Activated naive CD4-positive, alpha-beta T cell treated with anti-CD3 and anti-CD28 coated beads, Interleukin-2, amount 10 ng/mL, durations not matched to agents 7 days and 5 days (primary cell): ENCODE measurements at regions of chr3 and their contacts with region 1.

Region 1: GRCh38 chr3:57951066-57951882 is 56.9 kb upstream of the FLNB start:
- DNase-seq: no peak
- H3K4me3 Mint-ChIP-seq: no peak overlapping the region
- H3K27ac Mint-ChIP-seq: no peak overlapping the region
- H3K4me1 Mint-ChIP-seq: no peaks in the 10 kb centered on the region
- H3K27me3 Mint-ChIP-seq: peaks cover 11% of the 10 kb centered on the region

Region 2: GRCh38 chr3:57961828-57962447 is 10.7 kb after region 1 on chr3:
- CTCF ChIA-PET with region 1: interaction called, 11 read pairs
- DNase-seq: no peak
- H3K4me3 Mint-ChIP-seq: no peak overlapping the region
- H3K27ac Mint-ChIP-seq: no peak overlapping the region
- H3K4me1 Mint-ChIP-seq: peaks cover 12% of the 10 kb centered on the region
- H3K27me3 Mint-ChIP-seq: no peaks in the 10 kb centered on the region

Region 3: DNA sequence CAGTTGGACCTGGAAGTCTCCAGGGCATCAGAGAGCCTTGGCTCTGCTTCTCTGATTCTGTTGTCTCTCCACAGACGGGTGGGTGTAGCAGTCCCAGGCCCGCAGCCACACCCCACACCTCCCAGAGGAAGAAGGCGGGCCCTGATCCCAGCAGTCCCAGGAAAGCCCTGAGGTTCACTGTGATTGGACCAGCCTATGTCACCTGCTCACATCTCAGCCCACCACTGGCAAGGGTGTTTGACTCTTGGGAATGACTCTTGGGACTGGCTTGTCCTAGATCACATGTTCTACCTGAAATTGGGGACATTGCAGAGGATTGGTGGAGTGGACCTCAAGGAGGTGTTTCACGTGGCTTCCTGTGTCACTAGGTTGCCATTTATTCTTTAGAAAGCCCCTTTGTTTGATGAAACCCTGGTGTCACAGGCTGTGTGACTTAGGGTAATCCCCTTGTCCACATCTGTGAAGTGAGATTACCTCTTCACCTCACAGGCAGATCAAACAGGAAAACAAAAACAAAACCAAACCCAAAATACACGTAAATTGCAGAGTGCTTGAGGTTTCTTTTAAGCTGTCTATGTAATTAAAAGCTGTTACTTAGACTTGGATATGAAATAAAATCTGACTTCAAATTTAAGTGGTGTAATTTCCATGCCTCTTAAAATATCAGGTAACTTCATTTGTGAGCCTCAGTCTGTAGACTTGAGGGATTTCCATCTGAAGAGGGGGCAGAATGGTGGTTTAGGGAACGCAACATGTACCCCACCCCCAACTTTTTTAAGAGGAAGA is 83.7 kb after region 1 on chr3:
- CTCF ChIA-PET with region 1: no interaction called
- DNase-seq: peak; percentile 67
- H3K4me3 Mint-ChIP-seq: no peak overlapping the region
- H3K27ac Mint-ChIP-seq: peak overlapping the region; percentile 85
- H3K4me1 Mint-ChIP-seq: peaks cover 42% of the 10 kb centered on the region
- H3K27me3 Mint-ChIP-seq: no peaks in the 10 kb centered on the region

Region 4: DNA sequence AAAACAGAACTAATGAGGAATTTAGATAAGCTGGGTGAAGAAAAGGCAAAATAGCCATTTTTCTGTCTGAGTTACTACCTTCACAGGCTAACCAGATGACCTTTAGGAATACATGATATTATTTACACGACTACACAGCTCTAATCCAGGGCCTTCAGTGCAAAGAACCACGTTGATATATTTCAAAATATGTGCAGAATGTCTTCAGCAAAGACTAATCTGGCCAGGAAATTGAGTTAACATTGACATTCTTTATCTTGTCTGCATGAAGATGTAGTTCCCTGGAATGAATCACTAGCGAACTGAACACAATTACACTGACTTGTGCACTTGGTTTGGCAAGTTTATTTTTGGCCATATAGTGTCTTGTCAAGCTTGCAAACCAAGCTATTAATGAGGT is 440.9 kb after region 1 on chr3:
- CTCF ChIA-PET with region 1: no interaction called
- DNase-seq: no peak
- H3K4me3 Mint-ChIP-seq: no peak overlapping the region
- H3K27ac Mint-ChIP-seq: no peak overlapping the region
- H3K4me1 Mint-ChIP-seq: peaks cover 12% of the 10 kb centered on the region
- H3K27me3 Mint-ChIP-seq: no peaks in the 10 kb centered on the region